ENCODE measurements at regions of chr12 and their contacts with region 1.

Region 1: GRCh38 chr12:50111693-50112455 is at the start of gene COX14:
- DNase-seq: peak; percentile 97 to 100 (median 99)
- ATAC-seq: peak; percentile 90
- H3K4me3 ChIP-seq: peak within 1 kb of the TSS; percentile 94
- H3K4me3 Mint-ChIP-seq: peak within 1 kb of the TSS; percentile 92 to 100 (median 98)
- H3K27ac ChIP-seq: peak within 1 kb of the TSS; percentile 95
- H3K27ac Mint-ChIP-seq: peak within 1 kb of the TSS; percentile 95 to 99 (median 98)
- H3K4me1 ChIP-seq: peaks cover 14 to 23% of the 10 kb centered on the region in 2 donors
- H3K4me1 Mint-ChIP-seq: peaks cover 15 to 47% (median 40%) of the 10 kb centered on the region in 7 donors
- H3K27me3 ChIP-seq: no peaks in the 10 kb centered on the region
- H3K27me3 Mint-ChIP-seq: no peaks in the 10 kb centered on the region
- total RNA-seq, gene COX14: 37.2 to 49.4 (median 46.9) TPM

Region 2: DNA sequence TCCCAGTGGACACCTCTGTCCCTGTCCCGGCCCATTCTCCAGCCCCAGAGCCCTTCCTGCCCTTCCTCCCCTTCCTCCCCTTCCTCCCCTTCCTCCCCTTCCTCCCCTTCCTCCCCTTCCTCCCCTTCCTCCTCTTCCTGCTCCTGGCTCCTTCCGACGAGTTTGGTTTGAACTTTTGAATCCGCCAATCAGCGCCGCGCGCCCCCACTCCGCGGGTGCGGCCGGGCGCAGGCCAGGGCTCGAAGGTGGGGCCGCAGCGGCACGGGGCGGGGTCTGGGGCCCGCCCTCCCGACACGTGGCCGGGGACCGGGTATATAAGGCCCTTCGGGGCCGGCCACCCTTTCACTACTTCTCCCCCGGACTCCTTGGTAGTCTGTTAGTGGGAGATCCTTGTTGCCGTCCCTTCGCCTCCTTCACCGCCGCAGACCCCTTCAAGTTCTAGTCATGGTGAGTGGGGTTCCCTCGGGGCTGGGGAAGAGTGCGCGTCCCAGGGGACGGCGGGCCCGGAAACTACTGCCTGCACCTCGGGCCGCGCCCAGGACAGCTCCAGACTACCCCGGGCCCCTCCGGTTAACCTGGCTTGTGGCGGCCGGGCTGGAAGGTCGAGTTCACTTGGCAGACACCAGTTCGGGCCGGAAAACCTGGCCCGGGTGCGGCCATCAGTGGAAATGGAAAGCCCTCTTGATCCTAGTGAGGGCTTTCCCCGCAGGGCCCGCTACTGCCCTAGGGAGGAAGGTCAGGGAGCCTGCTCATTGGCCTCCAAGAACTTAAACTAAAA is 846.9 kb before region 1 on chr12 and contains the start of gene TUBA1C:
- CTCF ChIA-PET with region 1: no interaction called
- POLR2A ChIA-PET with region 1: no interaction called
- intact Hi-C with region 1: loop called in 1 of 2 experiments (anchors 10 kb)
- DNase-seq: peak; percentile 67 to 98 (median 72)
- ATAC-seq: peak; percentile 93
- H3K4me3 ChIP-seq: peak within 1 kb of the TSS; percentile 91
- H3K4me3 Mint-ChIP-seq: peak within 1 kb of the TSS; percentile 88 to 99 (median 92)
- H3K27ac ChIP-seq: peak within 1 kb of the TSS; percentile 68
- H3K27ac Mint-ChIP-seq: peak within 1 kb of the TSS; percentile 65 to 99 (median 89)
- H3K4me1 ChIP-seq: peaks cover 16% of the 10 kb centered on the region in 2 donors
- H3K4me1 Mint-ChIP-seq: peaks cover 4 to 51% (median 11%) of the 10 kb centered on the region in 7 donors
- H3K27me3 ChIP-seq: no peaks in the 10 kb centered on the region
- H3K27me3 Mint-ChIP-seq: peaks cover 0 to 2% (median 0%) of the 10 kb centered on the region in 5 donors
- total RNA-seq, gene TUBA1C: 17.9 to 195 (median 24.1) TPM

Region 3: GRCh38 chr12:50025187-50026059 is 86.5 kb before region 1 on chr12 and contains the start of gene RACGAP1:
- CTCF ChIA-PET with region 1: no interaction called
- POLR2A ChIA-PET with region 1: interaction called, 10 read pairs
- intact Hi-C with region 1: loop called (anchors 1 kb)
- DNase-seq: peak; percentile 77 to 98 (median 97)
- ATAC-seq: peak; percentile 99
- H3K4me3 ChIP-seq: peak within 1 kb of the TSS; percentile 81
- H3K4me3 Mint-ChIP-seq: peak within 1 kb of the TSS; percentile 90 to 99 (median 96)
- H3K27ac ChIP-seq: peak within 1 kb of the TSS; percentile 73
- H3K27ac Mint-ChIP-seq: peak within 1 kb of the TSS; percentile 38 to 97 (median 90)
- H3K4me1 ChIP-seq: peaks cover 0 to 12% of the 10 kb centered on the region in 2 donors
- H3K4me1 Mint-ChIP-seq: peaks cover 10 to 43% (median 18%) of the 10 kb centered on the region in 7 donors
- H3K27me3 ChIP-seq: no peaks in the 10 kb centered on the region
- H3K27me3 Mint-ChIP-seq: peaks cover 0 to 3% (median 0%) of the 10 kb centered on the region in 5 donors
- total RNA-seq, gene RACGAP1: 4.2 to 111 (median 8.0) TPM

Region 4: DNA sequence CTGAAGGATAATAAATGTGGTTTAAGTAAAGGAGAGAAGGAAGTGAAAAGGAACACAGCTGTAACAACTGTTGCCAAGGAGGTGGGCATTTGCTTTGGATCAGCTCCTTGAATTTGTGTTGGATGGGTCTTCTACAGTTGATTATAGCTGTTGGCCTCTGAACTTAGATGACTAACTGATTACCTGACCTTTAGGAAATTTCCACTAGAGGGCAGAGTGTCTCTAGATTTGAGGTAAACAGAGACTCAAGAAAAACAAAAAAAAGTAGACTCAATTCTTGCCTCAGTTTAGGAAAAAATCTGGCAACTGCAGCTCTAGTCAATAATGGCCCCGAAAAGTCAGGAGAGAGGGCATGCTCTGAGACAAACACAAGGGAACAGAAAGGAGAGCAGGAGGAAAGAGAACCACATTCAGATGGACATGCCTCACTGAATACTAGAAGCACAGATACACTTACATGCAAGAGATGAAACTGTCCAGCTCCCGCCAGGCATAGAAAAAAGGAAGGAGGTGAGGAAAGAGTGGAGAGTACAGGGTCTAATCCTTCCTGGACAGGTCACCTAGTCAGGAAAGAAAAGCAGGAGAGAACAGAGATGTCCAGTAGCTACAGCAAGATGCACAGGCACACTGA is 20.7 kb after region 1 on chr12:
- CTCF ChIA-PET with region 1: interaction called, 21 read pairs
- POLR2A ChIA-PET with region 1: interaction called, 36 read pairs
- intact Hi-C with region 1: loop called (anchors 2 kb)
- DNase-seq: peak in 7 of 9 donors; percentile 29 to 62 (median 49)
- ATAC-seq: peak; percentile 61
- H3K4me3 ChIP-seq: no peak overlapping the region
- H3K4me3 Mint-ChIP-seq: no peak overlapping the region
- H3K27ac ChIP-seq: no peak overlapping the region
- H3K27ac Mint-ChIP-seq: peak overlapping the region in 8 of 9 donors; percentile 2 to 79 (median 36)
- H3K4me1 ChIP-seq: no peaks in the 10 kb centered on the region
- H3K4me1 Mint-ChIP-seq: peaks cover 9 to 19% (median 14%) of the 10 kb centered on the region in 7 donors
- H3K27me3 ChIP-seq: no peaks in the 10 kb centered on the region
- H3K27me3 Mint-ChIP-seq: no peaks in the 10 kb centered on the region

Region 5: DNA sequence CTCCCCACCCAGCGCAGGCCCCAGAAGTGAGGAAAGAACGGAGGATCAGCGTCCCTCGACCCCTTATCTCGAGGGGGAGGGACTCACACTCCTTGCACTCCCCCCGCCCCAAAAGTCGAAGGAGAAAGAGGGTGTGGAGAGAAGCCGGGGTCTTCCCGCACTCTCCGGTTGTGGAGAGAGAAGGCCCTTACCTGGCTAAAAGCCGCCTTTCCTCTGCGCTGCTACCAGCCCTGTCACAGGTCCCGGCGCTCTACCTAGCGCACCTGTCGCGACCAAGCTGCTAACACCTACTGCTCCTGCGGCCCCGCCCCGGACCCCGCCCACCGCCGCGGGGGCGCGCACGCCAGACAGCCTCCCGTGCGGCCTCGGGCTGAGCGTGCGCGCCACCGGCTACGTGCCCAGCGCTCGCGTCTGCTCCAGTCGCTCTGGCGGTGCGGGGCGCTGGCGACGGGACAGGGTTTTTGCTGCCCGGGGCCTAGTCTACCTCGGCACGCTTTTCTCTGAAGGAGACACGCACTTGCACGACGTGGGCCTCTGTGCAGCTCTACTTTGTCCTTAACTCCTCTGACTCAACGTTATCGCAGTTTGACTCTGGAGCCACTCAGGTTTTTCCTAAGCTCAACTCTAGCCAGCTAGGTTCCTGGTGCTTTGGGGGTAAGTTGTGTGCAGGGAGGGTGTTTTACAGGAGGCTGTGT is 171.5 kb after region 1 on chr12 and contains the start of gene LIMA1:
- CTCF ChIA-PET with region 1: no interaction called
- POLR2A ChIA-PET with region 1: interaction called, 6 read pairs
- intact Hi-C with region 1: loop called (anchors 1 to 2 kb)
- DNase-seq: peak; percentile 91 to 97 (median 94)
- ATAC-seq: peak; percentile 100
- H3K4me3 ChIP-seq: peak within 1 kb of the TSS; percentile 80
- H3K4me3 Mint-ChIP-seq: peak within 1 kb of the TSS; percentile 87 to 98 (median 94)
- H3K27ac ChIP-seq: peak within 1 kb of the TSS; percentile 90
- H3K27ac Mint-ChIP-seq: peak within 1 kb of the TSS; percentile 80 to 95 (median 88)
- H3K4me1 ChIP-seq: peaks cover 11 to 15% of the 10 kb centered on the region in 2 donors
- H3K4me1 Mint-ChIP-seq: peaks cover 8 to 32% (median 23%) of the 10 kb centered on the region in 7 donors
- H3K27me3 ChIP-seq: no peaks in the 10 kb centered on the region
- H3K27me3 Mint-ChIP-seq: peaks cover 0 to 27% (median 0%) of the 10 kb centered on the region in 5 donors
- total RNA-seq, gene LIMA1: 9.8 to 33.6 (median 11.2) TPM

Measured in naive thymus-derived CD4-positive, alpha-beta T cell (primary cell).